Heart right ventricle (tissue), 16 donors: ENCODE measurements at regions of chr10 and their contacts with region 1.

Region 1: DNA sequence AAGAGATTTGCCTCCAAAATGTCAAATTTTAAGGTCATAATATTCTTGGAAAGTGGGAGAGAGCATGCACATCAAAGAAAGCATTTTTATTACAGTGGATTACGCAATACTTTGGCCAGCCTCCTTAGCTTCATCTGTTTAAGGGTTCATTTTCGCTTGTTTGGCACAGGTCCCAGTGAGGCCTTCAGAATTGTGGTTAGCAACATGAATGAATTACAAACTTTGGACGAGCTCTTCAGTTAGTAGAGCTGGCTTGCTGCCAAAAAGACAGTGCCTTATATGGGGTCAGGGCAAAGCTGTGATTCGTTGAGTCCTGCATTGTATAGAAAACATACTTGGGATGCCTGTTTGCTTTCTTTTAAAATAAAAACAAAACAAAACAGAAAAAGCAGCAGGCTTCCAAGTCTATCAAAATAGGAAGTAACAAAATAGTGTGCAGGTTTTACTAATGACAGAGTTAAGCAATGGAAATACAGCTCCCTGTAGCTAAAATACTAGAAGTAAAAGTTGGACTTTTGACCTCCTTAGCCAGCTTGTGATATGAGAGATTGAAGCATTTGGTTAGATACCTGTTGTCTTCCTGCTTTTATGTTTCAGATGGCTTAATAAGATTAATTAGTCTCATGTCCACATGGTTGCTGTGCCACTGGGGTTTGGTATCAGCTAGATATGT is 190.8 kb downstream of the MLLT10 start:
- DNase-seq: peak; percentile 47 to 97
- ATAC-seq: peak; percentile 92 to 98 (median 96)
- H3K4me3 ChIP-seq: no peak overlapping the region
- H3K27ac ChIP-seq: no peak overlapping the region
- H3K4me1 ChIP-seq: peaks cover 0 to 27% (median 20%) of the 10 kb centered on the region in 9 donors
- H3K27me3 ChIP-seq: no peaks in the 10 kb centered on the region
- CTCF ChIP-seq: no peak

Region 2: DNA sequence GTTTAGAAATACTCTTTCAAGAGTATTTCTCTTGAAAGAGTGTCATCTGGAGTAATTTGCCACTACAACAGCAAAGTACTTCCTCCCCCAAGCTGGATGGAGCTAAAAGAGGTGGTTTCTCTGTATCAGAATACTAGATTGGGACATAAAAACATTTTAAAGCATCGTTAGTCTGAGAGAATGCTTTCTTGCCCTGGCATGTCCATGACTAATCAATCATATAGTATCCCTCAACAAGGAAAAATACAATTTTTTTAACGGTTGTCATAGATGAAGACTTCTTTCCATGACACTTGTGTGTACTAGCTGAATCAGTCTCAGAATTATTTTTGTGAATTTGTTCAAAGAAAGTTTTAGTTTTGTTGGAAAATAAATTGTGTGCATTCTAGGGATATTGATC is 1065.6 kb before region 1 on chr10:
- intact Hi-C with region 1: no loop called
- DNase-seq: no peak
- ATAC-seq: no peak
- H3K4me3 ChIP-seq: no peak overlapping the region
- H3K27ac ChIP-seq: no peak overlapping the region
- H3K4me1 ChIP-seq: no peaks in the 10 kb centered on the region
- H3K27me3 ChIP-seq: no peaks in the 10 kb centered on the region
- CTCF ChIP-seq: no peak

Region 3: DNA sequence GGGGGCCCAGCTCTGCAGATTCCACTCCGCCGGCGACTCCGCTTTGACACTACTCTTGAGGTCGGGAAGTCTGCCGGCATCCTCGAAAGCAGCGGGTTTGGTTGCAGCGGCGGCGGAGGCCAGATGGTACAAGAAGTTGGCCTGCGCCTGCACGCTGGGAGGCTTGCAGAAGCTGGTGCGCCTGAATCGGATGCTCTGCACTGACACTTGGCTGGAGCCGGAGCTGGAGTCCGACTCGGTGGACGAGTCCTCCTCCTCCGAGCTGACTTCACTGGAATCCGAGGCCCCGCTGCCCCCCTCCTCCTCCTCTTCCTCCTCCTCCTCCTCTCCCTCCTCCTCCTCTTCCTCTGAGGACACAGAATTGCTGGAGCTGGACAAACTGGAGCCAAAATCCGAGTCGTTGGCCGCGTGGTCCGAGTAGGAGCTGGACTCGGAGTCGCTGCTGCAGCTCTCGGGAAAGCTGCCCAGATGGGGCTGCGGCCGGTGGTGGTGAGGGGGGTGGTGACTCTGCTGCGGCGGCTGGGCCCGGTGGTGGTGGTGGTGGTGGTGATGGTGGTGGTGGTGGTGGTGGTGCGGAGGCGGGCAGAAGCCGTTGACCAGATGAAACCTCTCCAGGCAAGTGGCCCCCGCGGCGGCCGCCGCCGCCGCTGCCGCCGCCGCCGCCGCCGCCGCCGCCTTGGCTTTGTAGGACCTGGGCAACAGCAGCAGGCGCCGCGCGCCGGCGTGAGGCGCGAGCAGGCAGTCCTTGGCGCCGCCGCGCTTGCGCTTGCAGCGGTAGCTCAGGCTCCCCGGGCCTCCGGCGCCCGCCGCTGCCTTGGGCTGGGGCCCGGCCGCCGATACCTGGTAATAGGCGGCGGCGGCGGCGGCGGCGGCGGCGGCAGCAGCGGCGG is 208.3 kb before region 1 on chr10:
- intact Hi-C with region 1: loop called in 1 of 10 experiments (anchors 5 kb)
- DNase-seq: peak; percentile 51 to 66
- ATAC-seq: peak; percentile 15 to 72 (median 48)
- H3K4me3 ChIP-seq: peak overlapping the region; percentile 39 to 72 (median 64)
- H3K27ac ChIP-seq: peak overlapping the region; percentile 76 to 93 (median 81)
- H3K4me1 ChIP-seq: peaks cover 0 to 57% (median 35%) of the 10 kb centered on the region in 9 donors
- H3K27me3 ChIP-seq: peaks cover 0 to 92% (median 0%) of the 10 kb centered on the region in 7 donors
- CTCF ChIP-seq: no peak

Region 4: DNA sequence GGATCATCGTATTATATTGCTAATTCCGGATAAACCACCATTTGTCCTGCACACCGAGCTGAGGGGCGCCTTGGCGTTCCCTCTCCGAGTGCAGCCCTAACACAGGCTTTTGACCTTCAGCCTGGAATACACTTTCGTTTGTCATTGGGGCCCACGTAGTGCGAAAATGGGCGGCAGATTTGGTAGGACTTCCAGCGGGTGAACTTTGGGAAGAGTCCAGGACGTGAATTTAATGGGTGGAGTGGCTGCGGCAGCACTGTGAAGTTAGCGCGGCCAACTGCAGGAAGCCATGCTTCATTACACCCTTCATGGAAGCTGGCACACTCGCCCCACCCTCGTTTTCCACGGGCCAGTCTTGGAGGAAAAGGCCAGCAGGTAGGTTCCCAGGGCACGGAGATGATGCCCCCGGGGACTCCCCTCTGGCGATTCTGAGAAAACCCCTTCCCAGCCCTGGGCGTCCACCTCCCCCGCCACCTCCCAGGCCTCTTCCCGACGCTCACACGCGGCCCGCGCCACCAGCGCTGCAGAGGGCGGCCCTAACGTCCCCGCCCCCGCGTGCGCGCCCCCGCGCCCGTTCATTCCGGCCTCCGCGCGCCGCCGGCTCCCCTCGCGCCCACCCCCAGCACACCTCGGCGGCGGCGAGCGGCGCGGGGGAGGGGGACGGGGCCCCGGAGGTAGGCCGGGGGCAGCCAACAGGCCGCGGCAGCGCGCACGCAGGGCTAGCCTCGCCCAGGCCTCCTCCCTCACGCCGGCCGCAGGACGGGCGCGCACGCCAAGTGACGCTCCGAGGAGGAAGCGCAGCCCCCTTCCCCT is 191.2 kb before region 1 on chr10 and contains the start of gene MLLT10:
- intact Hi-C with region 1: loop called in 2 of 10 experiments (anchors 10 kb)
- DNase-seq: peak; percentile 94 to 96
- ATAC-seq: peak; percentile 94 to 97 (median 96)
- H3K4me3 ChIP-seq: peak within 1 kb of the TSS; percentile 72 to 88 (median 80)
- H3K27ac ChIP-seq: peak within 1 kb of the TSS; percentile 76 to 99 (median 98)
- H3K4me1 ChIP-seq: peaks cover 0 to 44% (median 27%) of the 10 kb centered on the region in 9 donors
- H3K27me3 ChIP-seq: no peaks in the 10 kb centered on the region
- CTCF ChIP-seq: peak in 5 of 9 donors; percentile 8 to 37 (median 21)
- total RNA-seq, gene MLLT10: 18.9 to 28.4 (median 24.6) TPM